HEK293 (cell line): ENCODE measurements at regions of chr11 and their contacts with region 1.

Region 1: DNA sequence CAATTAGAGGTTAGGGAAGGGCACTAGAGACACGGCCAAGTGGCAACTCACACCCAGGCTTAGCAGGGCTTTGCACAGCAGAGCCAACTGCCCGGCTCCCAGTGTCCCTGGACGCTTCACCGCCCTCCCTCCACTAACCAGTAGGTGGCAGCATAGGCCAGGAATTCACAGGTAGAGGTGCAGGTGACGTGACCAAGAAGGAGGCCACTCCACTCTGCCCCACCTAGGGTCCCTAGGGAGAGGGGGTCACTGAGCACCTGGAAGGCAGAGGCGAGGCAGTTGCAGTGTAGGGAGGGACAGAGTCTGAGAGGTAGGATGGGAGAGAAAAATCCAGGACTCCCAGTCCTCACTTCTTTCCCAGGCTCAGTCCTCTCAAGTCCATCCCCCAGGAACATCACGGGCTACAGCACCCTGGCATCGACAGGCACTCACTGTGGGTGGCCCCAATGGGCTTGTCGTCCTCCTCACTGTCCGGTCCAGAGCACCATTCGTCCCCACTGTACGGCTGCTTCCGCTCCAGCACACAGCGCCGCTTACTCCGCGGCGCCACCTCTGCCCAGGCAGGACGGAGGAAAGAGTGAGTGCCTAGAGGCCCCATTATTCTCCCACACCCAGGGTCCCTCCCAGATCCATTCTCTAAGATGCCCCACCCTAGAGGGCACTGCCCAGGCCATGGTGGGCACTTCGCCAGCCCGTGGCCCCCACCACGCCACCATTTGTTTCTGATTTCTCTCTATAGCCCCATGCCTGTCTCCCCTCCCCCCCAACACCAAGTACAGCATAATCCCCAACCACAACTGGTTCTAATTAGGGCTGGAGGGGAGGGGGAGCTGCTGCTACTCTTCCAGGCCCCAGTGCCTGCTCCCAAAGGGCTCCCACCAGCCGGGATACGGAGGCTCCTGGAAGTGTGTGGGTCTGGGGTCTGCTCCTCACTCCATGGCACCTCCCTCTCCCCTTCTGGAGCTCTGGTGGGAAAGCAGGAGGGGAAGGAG is 18.4 kb downstream of the BCL9L start:
- H3K4me3 ChIP-seq: no peak overlapping the region
- H3K27ac ChIP-seq: no peak overlapping the region
- H3K4me1 ChIP-seq: peaks cover 14% of the 10 kb centered on the region
- CTCF ChIP-seq: peak; percentile 92

Region 2: DNA sequence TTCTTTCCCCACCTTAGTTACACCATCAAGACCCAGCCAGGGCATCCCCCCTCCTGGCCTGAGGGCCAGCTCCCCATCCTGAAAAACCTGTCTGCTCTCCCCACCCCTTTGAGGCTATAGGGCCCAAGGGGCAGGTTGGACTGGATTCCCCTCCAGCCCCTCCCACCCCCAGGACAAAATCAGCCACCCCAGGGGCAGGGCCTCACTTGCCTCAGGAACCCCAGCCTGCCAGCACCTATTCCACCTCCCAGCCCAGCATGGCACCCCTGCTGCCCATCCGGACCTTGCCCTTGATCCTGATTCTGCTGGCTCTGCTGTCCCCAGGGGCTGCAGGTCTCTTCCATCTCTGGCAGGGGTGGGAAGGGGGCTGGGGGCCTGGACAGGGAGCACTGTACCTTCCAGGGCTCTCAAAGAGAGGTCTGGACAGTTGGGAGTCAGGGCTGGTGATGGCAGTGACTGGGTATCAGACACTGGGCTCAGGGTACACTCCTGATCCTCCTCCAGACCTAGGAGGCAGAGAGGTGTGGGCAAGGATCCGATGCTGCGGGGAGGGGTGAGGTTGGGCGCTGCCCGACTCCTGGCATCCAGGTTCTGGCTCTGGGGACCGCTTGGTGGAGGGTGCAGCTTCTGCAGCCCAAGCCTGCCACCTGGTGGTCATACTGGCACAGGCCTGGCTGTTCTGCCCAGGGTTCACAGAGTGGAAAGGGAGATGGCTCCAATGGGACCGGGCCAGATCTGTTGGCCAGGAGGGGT is 48.9 kb after region 1 on chr11 and contains the start of gene UPK2:
- CTCF ChIA-PET with region 1: interaction called, 30 read pairs
- POLR2A ChIA-PET with region 1: interaction called, 3 read pairs
- H3K4me3 ChIP-seq: no peak within 1 kb of the TSS
- H3K27ac ChIP-seq: no peak within 1 kb of the TSS
- H3K4me1 ChIP-seq: no peaks in the 10 kb centered on the region
- CTCF ChIP-seq: peak; percentile 90

Region 3: GRCh38 chr11:119168471-119169281 is 261.3 kb after region 1 on chr11 and contains the start of gene NLRX1:
- CTCF ChIA-PET with region 1: no interaction called
- POLR2A ChIA-PET with region 1: no interaction called
- H3K4me3 ChIP-seq: peak within 1 kb of the TSS; percentile 83
- H3K27ac ChIP-seq: peak within 1 kb of the TSS; percentile 82
- H3K4me1 ChIP-seq: no peaks in the 10 kb centered on the region
- CTCF ChIP-seq: peak; percentile 75; the same call in 1 of the 2 replicates